CD8-positive, alpha-beta memory T cell (primary cell): ENCODE measurements at regions of chr11 and their contacts with region 1.

Region 1: DNA sequence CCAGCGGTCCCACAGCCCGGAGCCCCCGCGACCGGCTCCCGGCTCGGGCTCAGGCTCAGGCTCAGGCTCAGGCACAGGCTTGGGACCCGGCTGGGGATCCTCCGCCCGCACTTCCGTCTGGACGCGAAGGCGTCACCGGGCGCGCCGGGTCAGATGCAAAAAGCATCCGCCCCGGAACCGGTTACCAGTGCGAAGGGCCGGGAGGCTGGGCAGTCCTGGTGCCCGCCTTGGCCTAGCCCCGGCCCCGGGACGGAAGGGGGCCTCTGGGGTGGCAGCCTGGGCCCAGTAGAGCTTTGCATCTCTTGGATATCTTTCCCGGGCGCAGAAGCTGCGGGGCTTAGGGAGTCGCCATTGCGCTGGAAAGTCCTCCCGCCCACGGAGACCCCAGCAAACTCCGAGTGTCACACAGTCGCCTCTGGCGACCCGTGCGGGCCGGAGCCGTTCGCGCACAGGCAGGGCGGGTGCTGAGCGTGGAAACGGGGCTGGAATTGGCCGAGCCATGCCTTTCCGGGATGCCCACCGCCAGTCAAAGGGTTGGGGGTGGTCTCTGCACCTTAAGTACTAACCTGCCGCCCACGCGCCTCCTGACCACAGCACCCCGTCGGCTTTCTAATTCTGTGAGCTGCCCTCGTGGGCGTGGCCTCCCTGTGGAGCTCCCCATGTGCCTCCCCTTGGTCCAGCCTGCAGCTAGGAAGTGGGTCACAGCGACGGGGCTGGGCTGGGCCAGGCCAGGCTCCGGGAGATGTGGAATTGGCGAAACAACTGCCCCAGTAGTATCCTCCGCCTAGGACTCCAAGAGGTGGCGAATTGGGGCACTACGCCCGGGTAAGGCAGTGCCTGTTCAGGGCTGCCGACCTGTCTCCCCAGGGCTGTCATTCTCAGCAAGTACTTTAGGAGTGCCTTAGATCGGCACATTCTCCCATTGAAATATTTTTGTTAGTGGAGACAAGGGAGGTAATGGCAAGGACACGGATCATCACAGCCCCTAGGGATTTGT is at the start of gene TMEM9B:
- DNase-seq: peak; percentile 66 to 84 (median 79)
- H3K4me3 ChIP-seq: peak within 1 kb of the TSS; percentile 87
- H3K4me3 Mint-ChIP-seq: peak within 1 kb of the TSS; percentile 94 to 97 (median 97)
- H3K27ac ChIP-seq: peak within 1 kb of the TSS; percentile 94
- H3K27ac Mint-ChIP-seq: peak within 1 kb of the TSS; percentile 91 to 99 (median 97)
- H3K4me1 ChIP-seq: peaks cover 24% of the 10 kb centered on the region
- H3K4me1 Mint-ChIP-seq: peaks cover 32 to 44% (median 33%) of the 10 kb centered on the region in 3 donors
- H3K27me3 ChIP-seq: no peaks in the 10 kb centered on the region
- H3K27me3 Mint-ChIP-seq: no peaks in the 10 kb centered on the region
- total RNA-seq, gene TMEM9B: 31.3 to 32.7 TPM

Region 2: GRCh38 chr11:8688414-8689362 is 275.9 kb before region 1 on chr11:
- CTCF ChIA-PET with region 1: no interaction called
- POLR2A ChIA-PET with region 1: interaction called, 10 read pairs
- DNase-seq: peak; percentile 65 to 89 (median 75)
- H3K4me3 ChIP-seq: peak overlapping the region; percentile 87
- H3K4me3 Mint-ChIP-seq: peak overlapping the region; percentile 94 to 99 (median 97)
- H3K27ac ChIP-seq: peak overlapping the region; percentile 75
- H3K27ac Mint-ChIP-seq: peak overlapping the region; percentile 91 to 98 (median 97)
- H3K4me1 ChIP-seq: peaks cover 31% of the 10 kb centered on the region
- H3K4me1 Mint-ChIP-seq: peaks cover 44 to 58% (median 47%) of the 10 kb centered on the region in 3 donors
- H3K27me3 ChIP-seq: no peaks in the 10 kb centered on the region
- H3K27me3 Mint-ChIP-seq: no peaks in the 10 kb centered on the region

Region 3: DNA sequence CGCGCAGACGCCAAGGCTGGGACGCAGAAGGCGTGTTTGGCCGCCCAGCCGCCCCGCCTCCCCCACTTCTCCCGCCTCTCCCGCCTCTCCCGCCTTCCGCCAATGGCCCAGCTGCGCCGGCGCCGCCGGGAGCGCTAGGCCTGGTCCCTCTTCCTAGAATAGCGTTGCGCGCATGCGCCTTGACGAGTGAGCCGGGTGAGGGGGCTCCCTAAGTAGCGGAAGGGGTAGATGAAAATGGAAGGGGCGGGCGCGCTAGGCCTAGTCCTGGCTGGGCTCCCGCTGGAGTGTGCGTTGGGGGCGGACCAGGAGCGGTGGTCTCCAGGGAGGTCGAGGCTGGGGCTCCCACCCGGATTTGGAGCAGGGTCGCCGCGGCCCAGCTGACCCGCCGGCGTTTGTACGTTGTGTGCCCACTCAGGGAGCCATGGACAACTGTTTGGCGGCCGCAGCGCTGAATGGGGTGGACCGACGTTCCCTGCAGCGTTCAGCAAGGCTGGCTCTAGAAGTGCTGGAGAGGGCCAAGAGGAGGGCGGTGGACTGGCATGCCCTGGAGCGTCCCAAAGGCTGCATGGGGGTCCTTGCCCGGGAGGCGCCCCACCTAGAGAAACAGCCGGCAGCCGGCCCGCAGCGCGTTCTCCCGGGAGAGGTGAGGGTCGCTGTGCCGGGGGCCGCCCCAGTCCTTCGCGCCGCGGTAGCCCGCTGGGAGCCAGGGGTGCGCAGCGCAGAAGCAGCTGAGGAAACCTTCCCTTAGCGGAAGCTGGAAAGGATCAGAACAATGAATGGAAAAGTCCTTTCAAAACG is 53.4 kb before region 1 on chr11 and contains the start of gene AKIP1:
- CTCF ChIA-PET with region 1: interaction called, 26 read pairs
- POLR2A ChIA-PET with region 1: interaction called, 4 read pairs
- DNase-seq: peak; percentile 72 to 91 (median 80)
- H3K4me3 ChIP-seq: peak within 1 kb of the TSS; percentile 69
- H3K4me3 Mint-ChIP-seq: peak within 1 kb of the TSS; percentile 90 to 98 (median 93)
- H3K27ac ChIP-seq: peak within 1 kb of the TSS; percentile 55
- H3K27ac Mint-ChIP-seq: peak within 1 kb of the TSS; percentile 50 to 95 (median 89)
- H3K4me1 ChIP-seq: peaks cover 23% of the 10 kb centered on the region
- H3K4me1 Mint-ChIP-seq: peaks cover 30 to 47% (median 38%) of the 10 kb centered on the region in 3 donors
- H3K27me3 ChIP-seq: no peaks in the 10 kb centered on the region
- H3K27me3 Mint-ChIP-seq: no peaks in the 10 kb centered on the region
- total RNA-seq, gene AKIP1: 24.0 to 26.9 TPM